ENCODE measurements at regions of chr5 and their contacts with region 1.

Region 1: GRCh38 chr5:127313847-127314473 is 23.4 kb downstream of the MEGF10 start:
- DNase-seq: peak; percentile 64
- CTCF ChIP-seq: peak; percentile 85

Region 2: GRCh38 chr5:127296321-127296720 is 17.6 kb before region 1 on chr5:
- CTCF ChIA-PET with region 1: interaction called, 14 read pairs
- POLR2A ChIA-PET with region 1: no interaction called
- DNase-seq: no peak
- CTCF ChIP-seq: no peak

Region 3: GRCh38 chr5:127330116-127330515 is 16.2 kb after region 1 on chr5:
- CTCF ChIA-PET with region 1: interaction called, 11 read pairs
- POLR2A ChIA-PET with region 1: no interaction called
- DNase-seq: no peak
- CTCF ChIP-seq: no peak